H1 (cell line): ENCODE measurements at regions of chr7 and their contacts with region 1.

Region 1: DNA sequence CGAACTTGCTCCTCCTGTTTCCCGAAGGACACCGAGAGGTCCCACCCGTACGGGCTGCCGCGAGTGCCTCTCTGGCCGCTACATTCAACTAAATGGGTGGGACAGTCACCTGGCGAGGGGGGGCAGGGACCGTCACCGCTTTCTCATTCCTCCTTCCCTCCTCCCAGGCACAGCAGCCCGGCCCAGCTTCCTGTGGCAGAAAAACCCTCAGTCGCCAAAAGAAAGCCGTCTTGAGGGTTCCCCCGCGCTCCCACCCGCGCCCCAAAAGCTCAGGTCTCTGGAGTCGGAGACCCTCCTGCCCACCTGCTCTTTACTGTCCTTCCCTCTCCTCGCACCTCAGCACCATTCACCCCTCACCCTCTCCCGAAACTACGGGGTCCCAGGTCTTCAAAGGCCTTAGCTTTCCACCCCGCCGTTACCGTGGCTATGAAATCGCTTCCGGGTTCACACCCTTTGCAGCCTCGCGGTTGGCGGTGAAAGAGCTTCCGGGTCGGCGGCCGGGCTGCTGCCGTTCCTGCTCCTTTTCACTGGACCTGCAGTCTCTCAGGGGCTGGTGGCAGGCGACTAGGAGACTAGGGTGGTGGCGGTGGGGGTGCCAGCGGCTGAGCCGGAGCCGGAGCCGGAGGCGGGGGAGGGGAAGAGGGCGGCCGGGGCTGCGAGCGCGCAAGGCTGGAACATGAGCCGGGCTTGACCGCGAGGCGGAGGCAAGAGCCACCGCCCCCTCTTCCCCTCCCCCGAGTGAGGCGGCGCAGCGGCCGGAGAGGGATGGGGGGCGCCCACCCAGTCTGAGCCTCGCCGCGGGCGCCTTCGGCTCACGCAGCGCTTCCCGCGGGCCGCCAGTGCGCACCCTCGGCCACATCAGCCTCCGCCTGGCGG is at the starts of genes ANKIB1 and KRIT1:
- DNase-seq: peak; percentile 58 to 92
- H3K4me3 ChIP-seq: peak within 1 kb of the TSS; percentile 87 to 97 (median 93)
- H3K27ac ChIP-seq: peak within 1 kb of the TSS; percentile 89
- H3K4me1 ChIP-seq: peaks cover 0 to 5% (median 1%) of the 10 kb centered on the region in 4 experiments; a peak in 5 of 7 replicates
- H3K27me3 ChIP-seq: no peaks in the 10 kb centered on the region
- CTCF ChIP-seq: peak in 2 of 3 experiments; percentile 0 to 2; a peak in 2 of 4 replicates
- EP300 ChIP-seq: no peak; a peak in 1 of 3 replicates
- POLR2A ChIP-seq: peak; percentile 57 to 61; a peak in 2 of 3 replicates
- RAD21 ChIP-seq: peak in 1 of 2 experiments; percentile 1; a peak in 2 of 4 replicates
- total RNA-seq, gene ANKIB1: 43.0 and 43.8 TPM in 2 replicates
- total RNA-seq, gene KRIT1: 28.7 and 28.8 TPM in 2 replicates

Region 2: DNA sequence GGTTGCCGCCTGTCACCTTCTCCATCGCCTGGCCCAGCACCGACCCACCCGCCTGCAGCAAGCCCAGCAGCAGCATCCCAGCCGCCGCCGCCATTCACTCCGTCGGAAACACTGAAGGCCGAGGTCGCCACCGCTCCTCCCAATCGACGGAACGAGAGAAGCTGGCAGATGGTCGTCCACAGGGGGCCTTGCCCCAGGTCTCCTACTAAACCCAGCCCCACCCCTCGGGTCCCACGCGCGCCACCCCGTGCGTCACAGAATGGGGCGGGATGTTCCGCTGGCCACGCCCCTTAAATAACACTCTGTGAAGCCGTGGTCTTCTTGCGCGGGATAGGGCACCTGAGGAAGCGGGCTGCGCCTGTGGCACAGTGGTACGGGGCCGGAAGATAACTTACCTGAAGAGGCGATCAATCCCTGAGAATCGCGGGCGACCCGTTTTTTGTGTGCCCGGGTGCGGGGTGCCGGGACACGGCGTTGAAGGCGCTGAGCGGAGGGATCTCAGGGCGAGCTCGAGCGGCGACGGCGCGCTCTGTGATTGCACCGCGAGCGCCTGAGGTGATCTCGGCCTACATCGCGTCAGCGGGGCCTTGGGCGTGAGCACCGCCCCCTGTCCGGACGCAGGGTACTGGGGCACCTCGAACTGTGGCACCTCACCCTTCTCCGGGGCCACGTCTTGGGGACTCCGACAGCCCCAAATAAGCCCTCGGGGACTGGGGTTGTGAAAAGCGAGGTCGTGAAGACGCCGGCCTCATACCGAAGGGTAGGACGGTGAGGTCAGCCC is 111.3 kb before region 1 on chr7 and contains the start of gene CYP51A1:
- CTCF ChIA-PET with region 1: no interaction called
- POLR2A ChIA-PET with region 1: interaction called, 12 read pairs
- DNase-seq: peak; percentile 60 to 97
- H3K4me3 ChIP-seq: peak within 1 kb of the TSS; percentile 74 to 97 (median 89)
- H3K27ac ChIP-seq: peak within 1 kb of the TSS; percentile 94
- H3K4me1 ChIP-seq: peaks cover 0 to 6% (median 0%) of the 10 kb centered on the region in 4 experiments; a peak in 4 of 7 replicates
- H3K27me3 ChIP-seq: no peaks in the 10 kb centered on the region
- CTCF ChIP-seq: peak in 2 of 3 experiments; percentile 13 to 22; a peak in 2 of 4 replicates
- EP300 ChIP-seq: peak in 1 of 2 experiments; percentile 34; a peak in 1 of 3 replicates
- POLR2A ChIP-seq: peak; percentile 85 to 94
- RAD21 ChIP-seq: no peak
- total RNA-seq, gene CYP51A1: 109 and 111 TPM in 2 replicates

Region 3: GRCh38 chr7:92150450-92151017 is 95.2 kb before region 1 on chr7:
- CTCF ChIA-PET with region 1: no interaction called
- POLR2A ChIA-PET with region 1: no interaction called
- DNase-seq: no peak
- H3K4me3 ChIP-seq: no peak overlapping the region
- H3K27ac ChIP-seq: no peak overlapping the region
- H3K4me1 ChIP-seq: no peaks in the 10 kb centered on the region
- H3K27me3 ChIP-seq: no peaks in the 10 kb centered on the region
- CTCF ChIP-seq: no peak
- EP300 ChIP-seq: no peak
- POLR2A ChIP-seq: no peak
- RAD21 ChIP-seq: no peak

Region 4: DNA sequence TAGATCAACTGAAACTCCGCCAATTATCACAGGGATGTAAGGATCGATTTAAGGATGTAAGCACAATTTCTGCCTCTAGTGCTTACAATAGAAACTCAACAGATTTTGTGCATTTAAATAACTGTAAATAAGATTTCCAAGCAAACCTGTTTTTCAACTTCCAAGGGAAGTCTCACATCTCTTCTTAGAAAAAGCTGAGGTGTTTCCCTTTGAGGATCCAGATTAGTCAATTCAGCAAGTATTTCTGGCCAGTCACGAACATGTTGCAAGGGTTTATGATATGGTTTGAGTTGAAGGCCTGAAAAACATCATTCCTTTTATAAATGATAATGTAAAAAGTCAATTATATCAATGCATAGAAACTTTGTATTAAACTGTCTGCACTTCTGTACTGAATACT is 24.0 kb before region 1 on chr7:
- CTCF ChIA-PET with region 1: no interaction called
- POLR2A ChIA-PET with region 1: no interaction called
- DNase-seq: no peak
- H3K4me3 ChIP-seq: no peak overlapping the region
- H3K27ac ChIP-seq: no peak overlapping the region
- H3K4me1 ChIP-seq: no peaks in the 10 kb centered on the region
- H3K27me3 ChIP-seq: no peaks in the 10 kb centered on the region
- CTCF ChIP-seq: no peak
- EP300 ChIP-seq: no peak
- POLR2A ChIP-seq: no peak
- RAD21 ChIP-seq: no peak